Natural killer cell (primary cell): ENCODE measurements at regions of chr21 and their contacts with region 1.

Region 1: GRCh38 chr21:32929633-32930038 is 96.1 kb upstream of the OLIG2 start:
- DNase-seq: no peak
- ATAC-seq: peak; percentile 18 to 45 (median 39)
- H3K4me3 ChIP-seq: no peak overlapping the region
- H3K4me3 Mint-ChIP-seq: peak overlapping the region; percentile 86
- H3K27ac ChIP-seq: peak overlapping the region; percentile 58
- H3K27ac Mint-ChIP-seq: peak overlapping the region; percentile 88 to 89
- H3K4me1 ChIP-seq: peaks cover 53% of the 10 kb centered on the region
- H3K4me1 Mint-ChIP-seq: peaks cover 40 to 41% of the 10 kb centered on the region in 2 donors
- H3K27me3 ChIP-seq: no peaks in the 10 kb centered on the region
- H3K27me3 Mint-ChIP-seq: no peaks in the 10 kb centered on the region
- CTCF ChIP-seq: no peak

Region 2: DNA sequence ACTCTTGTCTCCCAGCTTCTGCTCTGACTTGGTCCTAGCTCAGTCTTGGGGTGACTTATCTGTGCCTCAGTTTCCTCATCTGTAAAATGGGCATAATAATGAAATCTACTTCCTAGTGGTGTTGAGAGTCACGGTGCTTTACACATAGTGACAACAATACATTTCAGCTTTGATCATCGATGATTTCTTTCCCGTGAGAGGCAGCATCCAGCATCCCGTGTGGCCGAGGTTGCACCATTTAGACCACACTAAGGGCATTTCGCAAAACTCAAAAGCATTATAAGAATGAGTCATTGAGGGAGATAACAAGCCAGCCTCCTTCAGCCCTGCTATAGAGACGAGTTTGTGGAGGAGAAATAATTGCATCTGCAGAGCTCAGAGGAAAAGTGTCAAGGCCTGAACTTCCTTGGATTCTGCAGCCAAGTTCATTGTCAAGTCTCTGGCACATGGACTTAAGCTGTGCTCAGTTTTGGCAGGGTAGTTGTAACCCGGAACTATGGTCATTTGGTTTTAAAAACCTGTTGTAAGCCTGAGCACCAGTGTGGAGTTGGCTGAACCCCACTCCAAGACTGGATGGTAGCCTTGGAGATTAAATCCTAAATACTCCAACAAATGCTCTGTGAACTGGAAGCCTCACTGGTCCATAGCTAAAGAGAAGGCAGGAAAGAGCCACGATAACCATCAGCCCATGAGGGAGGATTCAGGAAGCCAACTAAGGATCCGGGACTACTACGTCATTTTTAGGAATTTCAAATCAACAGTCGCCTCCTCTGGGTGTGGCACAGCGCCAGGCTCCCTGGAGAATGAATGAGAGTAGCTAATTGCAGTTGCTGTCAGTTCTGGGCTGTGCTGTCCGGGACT is 408.5 kb before region 1 on chr21:
- intact Hi-C with region 1: no loop called
- DNase-seq: no peak
- ATAC-seq: no peak
- H3K4me3 ChIP-seq: no peak overlapping the region
- H3K4me3 Mint-ChIP-seq: no peak overlapping the region
- H3K27ac ChIP-seq: no peak overlapping the region
- H3K27ac Mint-ChIP-seq: no peak overlapping the region
- H3K4me1 ChIP-seq: no peaks in the 10 kb centered on the region
- H3K4me1 Mint-ChIP-seq: peaks cover 0 to 5% of the 10 kb centered on the region in 2 donors
- H3K27me3 ChIP-seq: no peaks in the 10 kb centered on the region
- H3K27me3 Mint-ChIP-seq: no peaks in the 10 kb centered on the region
- CTCF ChIP-seq: no peak

Region 3: GRCh38 chr21:32900814-32901213 is 28.8 kb before region 1 on chr21:
- intact Hi-C with region 1: loop called (anchors 5 kb)
- DNase-seq: no peak
- ATAC-seq: peak in 2 of 3 donors; percentile 58 to 79
- H3K4me3 ChIP-seq: no peak overlapping the region
- H3K4me3 Mint-ChIP-seq: peak overlapping the region; percentile 6
- H3K27ac ChIP-seq: no peak overlapping the region
- H3K27ac Mint-ChIP-seq: peak overlapping the region in 1 of 2 donors; percentile 73
- H3K4me1 ChIP-seq: no peaks in the 10 kb centered on the region
- H3K4me1 Mint-ChIP-seq: peaks cover 16 to 19% of the 10 kb centered on the region in 2 donors
- H3K27me3 ChIP-seq: no peaks in the 10 kb centered on the region
- H3K27me3 Mint-ChIP-seq: peaks cover 13 to 42% of the 10 kb centered on the region in 2 donors
- CTCF ChIP-seq: no peak

Region 4: DNA sequence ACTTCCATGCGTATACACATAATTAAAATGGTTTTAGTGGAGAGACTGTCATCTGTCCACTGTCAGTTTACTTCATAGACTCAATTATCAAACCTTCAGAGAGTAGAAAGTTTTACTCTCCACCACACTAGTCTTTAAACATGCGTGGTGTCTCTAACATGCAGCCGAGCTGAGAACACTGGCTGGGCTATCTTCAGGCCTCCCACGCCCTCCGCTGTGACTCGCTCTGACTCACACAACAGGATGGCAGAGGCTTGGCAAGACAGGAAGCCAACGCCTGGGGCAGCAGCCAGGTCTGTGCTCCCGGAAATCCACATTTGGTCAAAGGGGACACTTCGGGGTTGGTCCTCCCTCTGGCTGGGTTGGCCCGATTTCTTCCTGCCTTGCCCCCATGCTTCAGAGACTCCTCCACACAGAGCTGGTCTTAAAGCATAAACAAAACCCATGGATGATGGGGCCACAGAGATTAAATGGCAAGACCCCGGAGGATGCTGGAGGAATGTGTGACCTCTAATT is 450.9 kb after region 1 on chr21:
- intact Hi-C with region 1: loop called (anchors 2 kb)
- DNase-seq: peak; percentile 61 to 84
- ATAC-seq: peak; percentile 60 to 79 (median 62)
- H3K4me3 ChIP-seq: no peak overlapping the region
- H3K4me3 Mint-ChIP-seq: peak overlapping the region; percentile 47
- H3K27ac ChIP-seq: peak overlapping the region; percentile 61
- H3K27ac Mint-ChIP-seq: peak overlapping the region; percentile 41 to 72
- H3K4me1 ChIP-seq: peaks cover 63% of the 10 kb centered on the region
- H3K4me1 Mint-ChIP-seq: peaks cover 50 to 53% of the 10 kb centered on the region in 2 donors
- H3K27me3 ChIP-seq: peaks cover 42% of the 10 kb centered on the region
- H3K27me3 Mint-ChIP-seq: peaks cover 46 to 49% of the 10 kb centered on the region in 2 donors
- CTCF ChIP-seq: no peak